ENCODE measurements at regions of chr13 and their contacts with region 1.

Region 1: DNA sequence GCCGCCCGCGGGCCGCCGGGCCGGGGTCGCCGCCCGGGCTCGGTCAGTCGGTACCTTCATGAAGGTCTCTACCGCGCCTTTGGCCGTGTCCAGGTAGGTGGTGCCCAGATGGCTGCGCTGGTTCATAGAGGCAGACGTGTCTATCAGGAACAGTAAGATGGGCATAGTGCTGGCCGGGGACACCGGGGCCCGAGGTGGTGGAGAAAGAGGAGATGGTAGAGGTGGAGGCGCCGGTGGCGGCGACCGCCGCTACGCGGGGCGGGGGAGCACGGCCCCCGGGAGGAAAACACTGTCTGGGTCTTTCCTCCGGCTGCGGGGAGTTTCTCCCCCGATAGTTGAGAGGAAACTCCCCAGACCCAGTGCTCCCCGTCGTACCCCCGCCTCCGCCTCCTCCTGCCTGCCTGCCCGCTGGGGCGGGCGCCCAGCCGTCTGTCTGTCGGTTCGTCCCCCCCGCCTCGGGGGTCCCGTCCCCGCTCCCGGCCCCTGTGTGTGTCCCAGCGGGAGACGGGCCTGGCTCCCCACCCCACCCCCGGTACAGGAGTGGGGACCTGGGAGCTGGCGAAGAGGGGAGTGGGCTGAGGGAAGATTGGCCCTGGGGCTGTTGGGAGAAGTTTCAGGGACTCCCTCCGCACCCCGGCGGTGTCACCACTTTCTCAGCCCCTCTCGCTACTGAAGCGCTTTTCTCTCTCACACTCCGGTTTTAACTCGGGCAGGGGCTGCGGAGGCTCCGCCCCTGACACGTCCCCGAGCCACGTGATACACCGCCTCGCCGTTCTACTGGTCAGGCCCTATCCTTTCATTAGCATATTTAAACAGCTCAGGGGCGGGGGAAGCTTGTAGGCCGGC is at the start of gene INTS6:
- DNase-seq: peak; percentile 97 to 100 (median 99)
- ATAC-seq: peak; percentile 76 to 84
- H3K4me3 Mint-ChIP-seq: peak within 1 kb of the TSS; percentile 84 to 99 (median 94)
- H3K27ac Mint-ChIP-seq: peak within 1 kb of the TSS; percentile 95 to 100 (median 98)
- H3K4me1 Mint-ChIP-seq: peaks cover 22 to 56% (median 54%) of the 10 kb centered on the region in 4 donors
- H3K27me3 Mint-ChIP-seq: peaks cover 0 to 2% (median 0%) of the 10 kb centered on the region in 5 donors
- polyA plus RNA-seq, gene INTS6: 20.9 to 25.1 (median 23.9) TPM

Region 2: DNA sequence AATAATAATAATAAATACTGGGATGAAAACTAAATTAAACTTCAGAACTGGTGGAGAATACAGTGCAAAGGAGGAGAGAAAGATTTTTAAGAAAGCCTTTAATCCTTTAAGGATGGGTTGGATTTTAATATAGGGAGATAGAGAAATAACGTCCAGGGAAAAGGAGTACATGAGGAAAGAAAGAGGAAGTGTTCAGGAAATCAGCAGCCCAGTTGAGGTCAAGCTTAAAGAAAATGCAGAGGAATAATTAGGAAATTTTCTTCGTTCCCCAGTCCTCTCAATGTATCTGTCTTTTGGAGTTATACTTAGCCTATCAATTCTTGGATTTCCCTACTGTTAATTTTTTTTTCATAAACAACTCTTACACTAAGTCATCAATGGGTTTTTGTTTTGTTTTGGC is 47.4 kb before region 1 on chr13:
- POLR2A ChIA-PET with region 1: no interaction called
- DNase-seq: no peak
- ATAC-seq: no peak
- H3K4me3 Mint-ChIP-seq: no peak overlapping the region
- H3K27ac Mint-ChIP-seq: peak overlapping the region in 3 of 10 donors; percentile 0 to 89 (median 12)
- H3K4me1 Mint-ChIP-seq: peaks cover 22 to 70% (median 64%) of the 10 kb centered on the region in 4 donors
- H3K27me3 Mint-ChIP-seq: no peaks in the 10 kb centered on the region

Region 3: GRCh38 chr13:51435002-51435578 is 17.5 kb before region 1 on chr13:
- POLR2A ChIA-PET with region 1: interaction called, 21 read pairs
- DNase-seq: peak in 3 of 10 donors; percentile 42 to 54 (median 45)
- ATAC-seq: peak; percentile 32 to 58
- H3K4me3 Mint-ChIP-seq: no peak overlapping the region
- H3K27ac Mint-ChIP-seq: no peak overlapping the region
- H3K4me1 Mint-ChIP-seq: peaks cover 6 to 20% (median 15%) of the 10 kb centered on the region in 4 donors
- H3K27me3 Mint-ChIP-seq: no peaks in the 10 kb centered on the region

Region 4: DNA sequence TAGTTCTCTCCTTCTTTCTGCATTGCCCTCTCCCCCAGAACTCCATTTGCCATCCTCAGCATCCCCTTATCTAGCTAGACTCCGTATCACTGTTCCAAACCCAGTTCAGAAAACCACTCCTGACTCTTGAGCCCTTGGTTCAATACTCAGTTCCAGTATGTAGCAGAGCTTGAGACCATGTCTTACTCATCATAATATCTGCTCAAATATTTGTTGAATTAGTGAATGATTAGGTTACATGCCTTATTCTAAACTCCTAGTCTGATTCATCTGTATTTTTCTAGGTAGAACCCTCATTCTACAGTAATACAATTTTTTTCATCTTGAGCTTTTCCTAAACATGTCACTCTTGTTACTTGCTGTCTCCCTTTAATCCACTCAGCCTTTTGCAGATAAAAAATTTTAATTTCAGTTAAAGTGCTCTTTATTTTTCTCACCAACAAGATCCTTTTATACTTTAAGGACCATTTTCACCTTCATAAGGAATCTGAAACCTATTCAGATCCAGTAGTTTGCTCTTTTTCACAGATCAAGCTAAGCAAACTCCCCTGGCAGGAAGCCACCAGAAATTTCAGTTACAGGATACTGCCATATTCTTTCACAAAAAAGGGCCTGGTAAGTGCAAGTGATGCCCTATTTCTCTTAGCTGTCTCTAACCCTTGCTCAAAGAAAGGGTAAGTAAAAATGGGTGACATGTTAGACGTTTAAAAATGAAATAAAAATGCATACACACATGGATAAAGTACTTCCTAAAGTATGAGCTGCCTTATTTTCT is 23.3 kb after region 1 on chr13:
- POLR2A ChIA-PET with region 1: interaction called, 12 read pairs
- DNase-seq: no peak
- ATAC-seq: no peak
- H3K4me3 Mint-ChIP-seq: no peak overlapping the region
- H3K27ac Mint-ChIP-seq: peak overlapping the region in 2 of 10 donors; percentile 1 to 4
- H3K4me1 Mint-ChIP-seq: peaks cover 3 to 7% (median 4%) of the 10 kb centered on the region in 4 donors
- H3K27me3 Mint-ChIP-seq: no peaks in the 10 kb centered on the region

Region 5: DNA sequence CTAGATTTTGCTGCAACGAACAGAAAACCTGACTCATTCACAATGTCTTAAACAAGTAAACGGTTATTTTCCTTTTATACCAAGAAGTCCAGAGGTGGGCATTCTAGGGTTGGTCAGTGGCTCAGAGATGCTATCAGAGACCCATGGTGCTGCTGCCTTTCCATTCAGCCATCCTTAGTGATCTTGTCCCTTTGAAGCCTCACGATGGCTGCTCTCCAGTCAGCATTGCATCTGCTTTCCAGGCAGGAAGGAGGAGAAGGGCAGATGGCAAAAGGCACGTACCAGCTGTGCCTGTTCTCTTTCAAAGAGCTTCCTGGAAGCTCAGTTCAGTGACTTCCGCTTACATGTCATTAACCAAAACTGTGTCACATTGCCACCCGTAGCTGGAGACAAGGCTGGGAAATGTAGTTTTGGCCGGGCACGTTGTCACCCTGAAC is 161.8 kb after region 1 on chr13:
- POLR2A ChIA-PET with region 1: interaction called, 25 read pairs
- DNase-seq: peak in 9 of 10 donors; percentile 7 to 67 (median 44)
- ATAC-seq: peak; percentile 93 to 98
- H3K4me3 Mint-ChIP-seq: peak overlapping the region; percentile 67 to 91 (median 84)
- H3K27ac Mint-ChIP-seq: peak overlapping the region; percentile 68 to 97 (median 94)
- H3K4me1 Mint-ChIP-seq: peaks cover 6 to 47% (median 19%) of the 10 kb centered on the region in 4 donors
- H3K27me3 Mint-ChIP-seq: no peaks in the 10 kb centered on the region

Region 6: DNA sequence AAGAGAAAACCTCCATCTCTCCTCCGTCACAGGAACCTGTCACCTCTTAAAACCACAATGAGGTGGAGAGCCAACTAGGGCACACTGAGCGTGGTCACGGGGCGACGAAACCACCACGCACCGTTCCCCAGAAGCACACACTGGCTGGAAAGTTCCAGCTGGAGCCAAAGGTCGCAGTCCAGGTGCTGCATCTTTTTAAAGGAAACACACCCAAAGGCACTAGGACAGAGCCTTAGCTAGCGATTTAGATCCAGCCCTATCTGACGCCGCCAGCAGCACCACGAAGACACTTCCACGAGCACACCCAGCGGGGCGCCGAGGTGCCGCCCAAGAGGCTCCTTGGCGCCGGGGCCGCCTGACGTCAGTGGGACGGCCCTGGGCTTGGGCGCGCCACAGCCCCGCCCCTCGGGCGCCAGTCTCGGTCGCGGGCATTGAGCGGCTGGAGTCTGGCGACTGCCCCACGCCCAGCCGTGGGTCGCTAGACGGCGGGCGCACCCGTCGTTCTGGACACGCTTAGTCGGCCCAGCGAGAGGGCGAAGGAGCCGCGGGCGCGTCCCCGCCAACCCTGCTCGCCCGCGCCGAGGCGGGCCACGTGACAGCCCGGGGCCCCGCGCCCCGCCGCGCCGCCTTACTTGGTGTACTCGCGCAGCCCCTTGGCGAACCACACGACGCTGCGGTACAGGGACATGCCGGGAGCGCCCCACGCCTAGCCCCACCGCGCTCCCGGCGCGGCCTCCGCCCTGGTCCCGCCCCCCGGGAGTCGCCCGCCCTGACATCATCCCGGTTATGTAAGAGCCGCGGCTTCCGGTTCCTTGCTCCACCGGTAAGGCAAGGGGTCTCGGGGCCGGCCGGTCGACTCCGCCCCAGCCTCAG is 351.1 kb after region 1 on chr13 and contains the start of gene DHRS12:
- POLR2A ChIA-PET with region 1: interaction called, 106 read pairs
- DNase-seq: peak; percentile 77 to 94 (median 88)
- ATAC-seq: peak; percentile 72 to 73
- H3K4me3 Mint-ChIP-seq: peak within 1 kb of the TSS; percentile 89 to 99 (median 95)
- H3K27ac Mint-ChIP-seq: peak within 1 kb of the TSS; percentile 97 to 100 (median 100)
- H3K4me1 Mint-ChIP-seq: peaks cover 19 to 59% (median 55%) of the 10 kb centered on the region in 4 donors
- H3K27me3 Mint-ChIP-seq: peaks cover 0 to 3% (median 0%) of the 10 kb centered on the region in 5 donors
- polyA plus RNA-seq, gene DHRS12: 22.1 to 33.2 (median 26.0) TPM

Measured in naive thymus-derived CD8-positive, alpha-beta T cell (primary cell).